BJ (cell line): ENCODE measurements at regions of chr2 and their contacts with region 1.

Region 1: GRCh38 chr2:222782201-222782730 is 78.6 kb upstream of the ACSL3 start:
- DNase-seq: no peak
- H3K4me3 ChIP-seq: no peak overlapping the region
- H3K27me3 ChIP-seq: no peaks in the 10 kb centered on the region
- CTCF ChIP-seq: no peak

Region 2: DNA sequence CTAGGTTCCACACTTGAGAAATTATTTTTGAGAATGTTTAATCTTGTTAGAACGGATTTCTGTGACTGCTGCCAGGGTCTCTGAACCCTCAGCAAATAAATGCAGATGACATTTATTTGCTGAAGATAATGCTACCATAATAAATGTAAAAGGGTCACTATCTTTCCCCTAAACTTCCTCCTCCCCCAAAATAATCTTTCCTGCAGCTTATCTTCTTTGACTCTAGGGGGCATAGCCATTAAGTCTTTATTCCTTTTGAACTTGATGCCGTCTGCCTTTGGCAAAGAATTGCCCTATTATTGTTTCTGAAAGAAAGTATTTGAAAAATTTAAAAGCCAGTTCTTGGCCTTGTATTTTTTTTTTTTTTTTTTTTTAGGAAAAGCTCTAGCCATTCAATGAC is 15.0 kb after region 1 on chr2:
- CTCF ChIA-PET with region 1: interaction called, 10 read pairs
- POLR2A ChIA-PET with region 1: no interaction called
- DNase-seq: peak; percentile 17
- H3K4me3 ChIP-seq: no peak overlapping the region
- H3K27me3 ChIP-seq: no peaks in the 10 kb centered on the region
- CTCF ChIP-seq: peak; percentile 59